Caco-2 (cell line): ENCODE measurements at regions of chr10 and their contacts with region 1.

Region 1: DNA sequence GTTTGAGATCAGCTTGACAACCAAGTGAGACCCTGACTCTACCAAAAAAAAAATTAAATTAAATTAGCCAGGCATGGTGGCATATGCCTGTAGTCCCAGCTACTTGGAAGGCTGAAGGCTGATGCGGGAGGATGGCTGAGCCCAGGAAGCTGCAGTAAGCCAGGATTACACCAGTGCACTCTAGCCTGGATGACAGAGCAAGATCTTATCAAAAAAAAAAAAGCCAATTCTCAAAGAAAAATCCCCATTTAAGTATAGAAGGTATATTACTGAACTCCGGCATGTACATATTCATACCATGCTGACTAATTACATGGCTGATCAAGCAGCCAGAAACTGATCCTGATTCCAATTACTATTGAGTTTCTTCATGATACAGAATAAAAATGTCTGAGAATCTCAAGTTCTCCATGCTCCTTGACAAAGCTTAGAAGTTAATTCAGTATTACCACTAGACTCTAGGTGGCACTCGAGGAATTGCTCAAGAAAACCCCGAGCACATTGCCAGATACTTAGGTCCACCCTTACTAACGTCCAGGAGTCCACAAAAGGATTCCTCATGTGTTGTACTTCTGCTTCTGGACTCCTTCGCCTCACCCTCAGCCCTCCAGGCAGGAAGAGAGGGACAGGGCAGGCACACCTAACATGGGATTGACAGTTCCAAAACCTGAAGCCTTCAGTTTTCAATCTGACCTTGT is 148.9 kb downstream of the PARD3 start:
- DNase-seq: peak; percentile 62 to 65
- H3K4me3 ChIP-seq: no peak overlapping the region
- H3K4me3 Mint-ChIP-seq: no peak overlapping the region
- H3K27ac Mint-ChIP-seq: peak overlapping the region; percentile 26
- H3K4me1 ChIP-seq: peaks cover 15% of the 10 kb centered on the region
- H3K4me1 Mint-ChIP-seq: peaks cover 29% of the 10 kb centered on the region
- H3K27me3 ChIP-seq: no peaks in the 10 kb centered on the region
- H3K27me3 Mint-ChIP-seq: no peaks in the 10 kb centered on the region
- CTCF ChIP-seq: peak; percentile 26 to 63

Region 2: GRCh38 chr10:34815185-34816084 is 149.3 kb after region 1 on chr10 and contains the start of gene PARD3:
- CTCF ChIA-PET with region 1: interaction called, 4 read pairs
- POLR2A ChIA-PET with region 1: interaction called, 3 read pairs
- intact Hi-C with region 1: loop called (anchors 2 kb)
- DNase-seq: peak; percentile 80 to 82
- H3K4me3 ChIP-seq: peak within 1 kb of the TSS; percentile 92
- H3K4me3 Mint-ChIP-seq: peak within 1 kb of the TSS; percentile 79
- H3K27ac Mint-ChIP-seq: peak within 1 kb of the TSS; percentile 40
- H3K4me1 ChIP-seq: peaks cover 11% of the 10 kb centered on the region; the same call in 1 of the 2 replicates
- H3K4me1 Mint-ChIP-seq: peaks cover 36% of the 10 kb centered on the region
- H3K27me3 ChIP-seq: no peaks in the 10 kb centered on the region
- H3K27me3 Mint-ChIP-seq: no peaks in the 10 kb centered on the region
- CTCF ChIP-seq: peak in 1 of 2 experiments; percentile 19
- total RNA-seq, gene PARD3: 74.9 and 80.7 TPM in 2 replicates

Region 3: DNA sequence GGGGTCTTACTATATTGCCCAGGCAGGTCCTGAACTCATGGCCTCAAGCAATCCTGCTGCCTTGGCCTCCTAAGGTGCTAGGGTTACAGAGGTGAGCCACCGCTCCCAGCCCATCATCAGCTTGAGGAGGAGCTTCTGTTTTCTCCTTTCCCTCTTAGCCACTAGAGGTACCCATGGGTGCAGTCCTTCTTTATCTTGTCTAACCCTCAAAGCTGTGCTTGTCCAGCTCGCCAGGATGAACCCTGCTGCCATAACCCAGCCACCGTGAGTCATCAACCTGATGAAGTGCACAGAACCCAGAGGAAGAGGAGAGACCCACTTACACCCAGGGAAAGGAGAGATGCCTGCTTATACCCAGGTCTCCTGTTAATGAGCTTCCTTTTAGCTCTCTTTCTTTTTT is 290.6 kb after region 1 on chr10:
- CTCF ChIA-PET with region 1: interaction called, 3 read pairs
- POLR2A ChIA-PET with region 1: no interaction called
- intact Hi-C with region 1: loop called (anchors 5 kb)
- DNase-seq: no peak
- H3K4me3 ChIP-seq: no peak overlapping the region
- H3K4me3 Mint-ChIP-seq: no peak overlapping the region
- H3K27ac Mint-ChIP-seq: no peak overlapping the region
- H3K4me1 ChIP-seq: no peaks in the 10 kb centered on the region
- H3K4me1 Mint-ChIP-seq: peaks cover 7% of the 10 kb centered on the region
- H3K27me3 ChIP-seq: no peaks in the 10 kb centered on the region
- H3K27me3 Mint-ChIP-seq: no peaks in the 10 kb centered on the region
- CTCF ChIP-seq: no peak

Region 4: GRCh38 chr10:34985823-34986222 is 319.7 kb after region 1 on chr10:
- CTCF ChIA-PET with region 1: interaction called, 13 read pairs
- POLR2A ChIA-PET with region 1: no interaction called
- intact Hi-C with region 1: no loop called
- DNase-seq: peak; percentile 50 to 54
- H3K4me3 ChIP-seq: no peak overlapping the region
- H3K4me3 Mint-ChIP-seq: no peak overlapping the region
- H3K27ac Mint-ChIP-seq: no peak overlapping the region
- H3K4me1 ChIP-seq: no peaks in the 10 kb centered on the region
- H3K4me1 Mint-ChIP-seq: peaks cover 8% of the 10 kb centered on the region
- H3K27me3 ChIP-seq: no peaks in the 10 kb centered on the region
- H3K27me3 Mint-ChIP-seq: no peaks in the 10 kb centered on the region
- CTCF ChIP-seq: peak in 1 of 2 experiments; percentile 67